HepG2 (cell line): ENCODE measurements at regions of chr5 and their contacts with region 1.

Region 1: DNA sequence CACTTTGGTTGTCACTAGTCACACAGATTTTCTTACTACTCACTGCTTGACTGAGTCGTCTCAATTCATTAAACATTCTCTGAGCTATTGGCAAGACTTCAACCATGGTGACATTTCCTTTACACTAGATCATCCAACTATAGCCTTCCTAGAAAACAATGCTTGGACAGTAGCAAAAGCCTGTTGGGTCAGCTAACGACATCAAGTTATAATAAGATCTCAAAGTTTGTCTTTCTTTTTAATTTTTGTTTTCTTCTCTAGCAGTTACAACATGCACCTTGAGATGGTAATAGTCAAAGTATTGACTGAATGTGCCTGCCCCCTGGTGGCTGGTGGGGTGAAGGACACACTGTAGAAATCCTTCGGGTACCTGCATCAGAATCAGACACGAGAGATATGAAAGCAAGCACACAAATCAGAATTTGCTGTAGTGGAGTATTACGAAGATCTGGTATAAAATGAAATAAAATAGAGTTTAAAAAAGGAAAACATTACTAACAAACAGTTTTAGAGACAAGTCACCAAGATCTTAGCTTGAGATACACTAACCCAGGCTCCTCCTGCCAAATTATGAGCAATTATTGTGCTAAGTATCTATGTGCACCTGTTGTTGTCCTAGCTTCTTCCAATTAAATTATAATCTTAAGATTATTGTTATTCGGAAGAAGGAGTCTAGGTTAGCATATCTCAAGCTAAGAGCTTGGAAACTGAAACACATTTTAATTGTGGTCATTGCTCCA is 81.2 kb downstream of the ARL15 start:
- DNase-seq: peak; percentile 25
- ATAC-seq: peak; percentile 85
- H3K4me3 ChIP-seq: no peak overlapping the region
- H3K27ac ChIP-seq: no peak overlapping the region
- H3K4me1 ChIP-seq: no peaks in the 10 kb centered on the region
- H3K27me3 ChIP-seq: no peaks in the 10 kb centered on the region
- CTCF ChIP-seq: peak; percentile 81
- EP300 ChIP-seq: no peak
- POLR2A ChIP-seq: no peak
- RAD21 ChIP-seq: no peak

Region 2: GRCh38 chr5:53170748-53171349 is 1058.4 kb before region 1 on chr5:
- CTCF ChIA-PET with region 1: interaction called, 6 read pairs
- POLR2A ChIA-PET with region 1: no interaction called
- in situ Hi-C with region 1: loop called (anchors 10 kb)
- intact Hi-C with region 1: no loop called
- DNase-seq: peak; percentile 23
- ATAC-seq: peak; percentile 72
- H3K4me3 ChIP-seq: no peak overlapping the region
- H3K27ac ChIP-seq: no peak overlapping the region
- H3K4me1 ChIP-seq: no peaks in the 10 kb centered on the region
- H3K27me3 ChIP-seq: no peaks in the 10 kb centered on the region; a peak in 2 of 5 replicates
- CTCF ChIP-seq: peak; percentile 74
- EP300 ChIP-seq: no peak
- POLR2A ChIP-seq: no peak
- RAD21 ChIP-seq: peak; percentile 38; the same call in 1 of the 2 replicates

Region 3: GRCh38 chr5:53262348-53262970 is 966.8 kb before region 1 on chr5:
- CTCF ChIA-PET with region 1: interaction called, 7 read pairs
- POLR2A ChIA-PET with region 1: no interaction called
- in situ Hi-C with region 1: no loop called
- intact Hi-C with region 1: loop called (anchors 1 kb)
- DNase-seq: peak; percentile 2
- ATAC-seq: peak; percentile 48; the same call in 1 of the 3 replicates
- H3K4me3 ChIP-seq: no peak overlapping the region
- H3K27ac ChIP-seq: no peak overlapping the region
- H3K4me1 ChIP-seq: no peaks in the 10 kb centered on the region
- H3K27me3 ChIP-seq: no peaks in the 10 kb centered on the region
- CTCF ChIP-seq: peak; percentile 67
- EP300 ChIP-seq: no peak
- POLR2A ChIP-seq: no peak
- RAD21 ChIP-seq: no peak

Region 4: DNA sequence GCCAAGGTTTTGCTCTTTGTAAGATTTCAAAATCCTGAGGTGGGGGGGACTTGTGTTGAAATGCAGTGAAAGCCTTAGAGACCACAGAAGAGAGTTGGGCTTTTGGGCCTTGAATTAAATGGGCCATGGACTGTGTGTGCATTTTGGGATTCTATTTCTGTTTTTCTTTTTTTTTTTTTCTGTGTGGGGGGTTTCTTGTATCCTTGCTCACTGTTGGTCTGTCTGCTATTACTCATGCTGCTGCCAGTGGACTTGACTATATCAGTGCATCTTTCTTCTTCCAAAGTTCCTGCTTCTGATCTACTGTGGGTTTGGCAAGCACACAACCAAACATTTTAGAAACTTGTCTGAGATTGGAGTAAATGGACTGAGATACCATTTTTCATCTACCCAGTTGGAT is 263.8 kb before region 1 on chr5:
- CTCF ChIA-PET with region 1: no interaction called
- POLR2A ChIA-PET with region 1: no interaction called
- in situ Hi-C with region 1: no loop called
- intact Hi-C with region 1: loop called (anchors 10 kb)
- DNase-seq: no peak
- ATAC-seq: no peak
- H3K4me3 ChIP-seq: no peak overlapping the region
- H3K27ac ChIP-seq: no peak overlapping the region
- H3K4me1 ChIP-seq: no peaks in the 10 kb centered on the region
- H3K27me3 ChIP-seq: no peaks in the 10 kb centered on the region
- CTCF ChIP-seq: no peak
- EP300 ChIP-seq: no peak
- POLR2A ChIP-seq: no peak
- RAD21 ChIP-seq: no peak